ENCODE measurements at regions of chr7 and their contacts with region 1.

Region 1: GRCh38 chr7:13336227-13336626 is 648.8 kb downstream of the ARL4A start:
- DNase-seq: no peak
- H3K4me3 ChIP-seq: no peak overlapping the region
- H3K27ac ChIP-seq: no peak overlapping the region
- H3K4me1 ChIP-seq: no peaks in the 10 kb centered on the region
- H3K27me3 ChIP-seq: no peaks in the 10 kb centered on the region
- CTCF ChIP-seq: no peak
- POLR2A ChIP-seq: no peak

Region 2: DNA sequence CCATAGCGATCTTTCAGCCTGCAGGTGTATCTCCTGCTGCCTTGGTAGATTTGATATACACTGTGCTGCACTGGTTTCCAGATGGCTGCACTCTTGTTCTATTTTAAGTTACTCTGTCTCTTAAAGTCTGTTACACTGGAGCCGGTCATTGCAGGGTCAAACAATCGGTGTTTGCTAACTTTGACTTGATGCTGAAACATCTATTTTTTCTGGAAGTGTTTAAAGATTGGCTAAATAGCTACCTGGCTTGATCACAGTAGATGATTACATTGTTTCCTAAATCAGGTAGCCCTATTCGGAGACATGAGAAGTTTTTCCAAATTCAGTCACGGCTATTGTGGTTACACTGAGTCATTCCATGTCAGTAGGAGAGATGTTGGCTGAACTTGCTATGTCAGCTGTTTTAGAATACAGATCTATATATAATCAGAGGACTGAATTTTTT is 78.5 kb after region 1 on chr7:
- intact Hi-C with region 1: no loop called
- DNase-seq: no peak
- H3K4me3 ChIP-seq: no peak overlapping the region
- H3K27ac ChIP-seq: no peak overlapping the region
- H3K4me1 ChIP-seq: no peaks in the 10 kb centered on the region
- H3K27me3 ChIP-seq: no peaks in the 10 kb centered on the region
- CTCF ChIP-seq: no peak
- POLR2A ChIP-seq: no peak

Region 3: GRCh38 chr7:13518738-13519137 is 182.5 kb after region 1 on chr7:
- intact Hi-C with region 1: loop called (anchors 10 kb)
- DNase-seq: no peak
- H3K4me3 ChIP-seq: no peak overlapping the region
- H3K27ac ChIP-seq: no peak overlapping the region
- H3K4me1 ChIP-seq: peaks cover 0 to 6% (median 0%) of the 10 kb centered on the region in 3 donors
- H3K27me3 ChIP-seq: no peaks in the 10 kb centered on the region
- CTCF ChIP-seq: no peak
- POLR2A ChIP-seq: no peak

Measured in esophagus squamous epithelium (tissue), 5 donors.